A673 (cell line): ENCODE measurements at regions of chr9 and their contacts with region 1.

Region 1: GRCh38 chr9:129370770-129371169 is 192.7 kb upstream of the IER5L start:
- DNase-seq: no peak
- H3K4me3 ChIP-seq: no peak overlapping the region
- H3K27ac ChIP-seq: no peak overlapping the region
- H3K4me1 ChIP-seq: no peaks in the 10 kb centered on the region
- H3K27me3 ChIP-seq: no peaks in the 10 kb centered on the region
- CTCF ChIP-seq: no peak

Region 2: DNA sequence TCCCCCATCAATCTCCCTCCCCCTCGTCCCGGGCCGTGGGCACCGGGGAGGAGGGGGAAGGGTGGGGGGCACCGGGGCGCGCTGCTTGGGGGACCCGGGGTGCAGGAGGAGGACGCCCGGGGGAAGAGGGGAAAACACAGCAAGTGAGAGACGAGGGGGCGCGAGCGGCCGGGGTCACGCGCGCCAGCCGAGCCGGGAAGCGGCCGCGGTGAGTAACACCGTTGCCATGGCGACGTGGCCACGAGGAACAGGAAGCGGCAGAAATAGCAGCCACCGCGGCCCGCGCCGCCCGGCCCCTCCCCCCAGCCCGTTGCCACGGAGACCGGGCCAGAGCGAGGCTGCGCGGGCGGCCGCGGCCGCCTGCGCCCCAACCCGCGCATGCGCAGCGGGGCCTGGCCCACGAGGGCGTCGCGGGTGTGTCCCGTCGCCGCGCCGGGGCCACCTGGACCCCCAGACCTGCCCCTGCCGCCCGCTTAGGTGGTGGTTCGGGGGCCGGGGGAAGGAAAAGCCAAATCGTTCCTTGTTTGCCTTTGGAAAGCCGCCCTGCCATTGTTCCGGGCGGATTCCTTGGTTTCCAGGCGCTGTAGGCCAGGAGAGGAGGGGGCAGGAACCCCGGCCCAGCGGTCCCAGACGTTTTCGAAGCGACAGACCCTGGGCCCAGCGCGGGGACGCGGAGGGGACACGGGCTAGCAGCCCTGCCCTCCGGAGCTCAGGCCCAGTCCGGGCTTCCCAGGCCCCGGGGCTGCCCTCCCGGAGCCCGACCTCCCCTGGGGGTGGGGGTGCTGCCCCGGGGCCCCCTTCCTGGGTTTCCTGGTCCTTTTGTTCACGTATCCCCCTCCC is 43.0 kb after region 1 on chr9:
- CTCF ChIA-PET with region 1: interaction called, 14 read pairs
- POLR2A ChIA-PET with region 1: no interaction called
- intact Hi-C with region 1: no loop called
- DNase-seq: peak; percentile 97
- H3K4me3 ChIP-seq: peak overlapping the region; percentile 47
- H3K27ac ChIP-seq: peak overlapping the region; percentile 91
- H3K4me1 ChIP-seq: peaks cover 16% of the 10 kb centered on the region
- H3K27me3 ChIP-seq: no peaks in the 10 kb centered on the region
- CTCF ChIP-seq: no peak

Region 3: GRCh38 chr9:130058154-130058553 is 687.4 kb after region 1 on chr9:
- CTCF ChIA-PET with region 1: no interaction called
- POLR2A ChIA-PET with region 1: no interaction called
- intact Hi-C with region 1: no loop called
- DNase-seq: peak; percentile 44
- H3K4me3 ChIP-seq: no peak overlapping the region
- H3K27ac ChIP-seq: no peak overlapping the region
- H3K4me1 ChIP-seq: no peaks in the 10 kb centered on the region
- H3K27me3 ChIP-seq: no peaks in the 10 kb centered on the region
- CTCF ChIP-seq: peak; percentile 41; the same call in 1 of the 2 replicates